ENCODE measurements at regions of chr17 and their contacts with region 1.

Region 1: GRCh38 chr17:68435876-68436842 is 21.1 kb downstream of the WIPI1 start:
- DNase-seq: peak; percentile 79
- H3K4me3 Mint-ChIP-seq: peak overlapping the region; percentile 30
- H3K27ac Mint-ChIP-seq: peak overlapping the region; percentile 90
- H3K4me1 Mint-ChIP-seq: peaks cover 49% of the 10 kb centered on the region
- H3K27me3 Mint-ChIP-seq: no peaks in the 10 kb centered on the region

Region 2: DNA sequence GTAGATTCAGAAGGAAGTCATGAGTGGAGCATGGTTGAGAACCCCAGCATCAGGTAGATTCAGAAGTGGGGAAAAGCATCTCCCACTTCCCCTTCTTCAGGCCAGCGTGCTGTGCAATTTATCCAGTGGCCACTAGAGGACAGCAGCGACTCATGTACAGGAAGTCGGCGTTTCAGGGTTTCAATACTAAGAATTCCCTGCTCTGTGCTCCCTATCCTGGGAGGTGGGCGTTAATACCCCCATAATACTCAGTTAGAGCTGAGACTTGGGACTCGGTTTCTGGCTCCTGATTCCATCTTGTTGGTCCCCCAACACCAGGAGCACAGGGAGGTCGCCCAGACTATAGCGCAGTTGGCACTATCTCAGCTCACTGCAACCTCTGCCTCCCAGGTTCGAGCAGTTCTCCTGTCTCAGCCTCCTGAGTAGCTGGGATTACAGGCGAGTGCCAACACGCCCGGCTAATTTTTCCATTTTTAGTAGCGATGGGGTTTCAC is 263.7 kb before region 1 on chr17:
- intact Hi-C with region 1: loop called (anchors 2 kb)
- DNase-seq: peak; percentile 58
- H3K4me3 Mint-ChIP-seq: no peak overlapping the region
- H3K27ac Mint-ChIP-seq: no peak overlapping the region
- H3K4me1 Mint-ChIP-seq: peaks cover 29% of the 10 kb centered on the region
- H3K27me3 Mint-ChIP-seq: no peaks in the 10 kb centered on the region

Region 3: GRCh38 chr17:68210570-68211315 is 225.4 kb before region 1 on chr17:
- intact Hi-C with region 1: no loop called
- DNase-seq: no peak
- H3K4me3 Mint-ChIP-seq: no peak overlapping the region
- H3K27ac Mint-ChIP-seq: peak overlapping the region; percentile 8
- H3K4me1 Mint-ChIP-seq: peaks cover 48% of the 10 kb centered on the region
- H3K27me3 Mint-ChIP-seq: no peaks in the 10 kb centered on the region

Region 4: GRCh38 chr17:68260051-68260762 is 176.0 kb before region 1 on chr17:
- intact Hi-C with region 1: loop called (anchors 1 kb)
- DNase-seq: no peak
- H3K4me3 Mint-ChIP-seq: peak overlapping the region; percentile 77
- H3K27ac Mint-ChIP-seq: peak overlapping the region; percentile 93
- H3K4me1 Mint-ChIP-seq: peaks cover 67% of the 10 kb centered on the region
- H3K27me3 Mint-ChIP-seq: no peaks in the 10 kb centered on the region

Region 5: GRCh38 chr17:68356520-68356919 is 79.6 kb before region 1 on chr17:
- intact Hi-C with region 1: loop called (anchors 2 kb)
- DNase-seq: peak; percentile 75
- H3K4me3 Mint-ChIP-seq: peak overlapping the region; percentile 73
- H3K27ac Mint-ChIP-seq: peak overlapping the region; percentile 86
- H3K4me1 Mint-ChIP-seq: peaks cover 57% of the 10 kb centered on the region
- H3K27me3 Mint-ChIP-seq: no peaks in the 10 kb centered on the region

Region 6: GRCh38 chr17:68381076-68381900 is 54.9 kb before region 1 on chr17:
- intact Hi-C with region 1: no loop called
- DNase-seq: no peak
- H3K4me3 Mint-ChIP-seq: no peak overlapping the region
- H3K27ac Mint-ChIP-seq: no peak overlapping the region
- H3K4me1 Mint-ChIP-seq: peaks cover 13% of the 10 kb centered on the region
- H3K27me3 Mint-ChIP-seq: no peaks in the 10 kb centered on the region

Region 7: DNA sequence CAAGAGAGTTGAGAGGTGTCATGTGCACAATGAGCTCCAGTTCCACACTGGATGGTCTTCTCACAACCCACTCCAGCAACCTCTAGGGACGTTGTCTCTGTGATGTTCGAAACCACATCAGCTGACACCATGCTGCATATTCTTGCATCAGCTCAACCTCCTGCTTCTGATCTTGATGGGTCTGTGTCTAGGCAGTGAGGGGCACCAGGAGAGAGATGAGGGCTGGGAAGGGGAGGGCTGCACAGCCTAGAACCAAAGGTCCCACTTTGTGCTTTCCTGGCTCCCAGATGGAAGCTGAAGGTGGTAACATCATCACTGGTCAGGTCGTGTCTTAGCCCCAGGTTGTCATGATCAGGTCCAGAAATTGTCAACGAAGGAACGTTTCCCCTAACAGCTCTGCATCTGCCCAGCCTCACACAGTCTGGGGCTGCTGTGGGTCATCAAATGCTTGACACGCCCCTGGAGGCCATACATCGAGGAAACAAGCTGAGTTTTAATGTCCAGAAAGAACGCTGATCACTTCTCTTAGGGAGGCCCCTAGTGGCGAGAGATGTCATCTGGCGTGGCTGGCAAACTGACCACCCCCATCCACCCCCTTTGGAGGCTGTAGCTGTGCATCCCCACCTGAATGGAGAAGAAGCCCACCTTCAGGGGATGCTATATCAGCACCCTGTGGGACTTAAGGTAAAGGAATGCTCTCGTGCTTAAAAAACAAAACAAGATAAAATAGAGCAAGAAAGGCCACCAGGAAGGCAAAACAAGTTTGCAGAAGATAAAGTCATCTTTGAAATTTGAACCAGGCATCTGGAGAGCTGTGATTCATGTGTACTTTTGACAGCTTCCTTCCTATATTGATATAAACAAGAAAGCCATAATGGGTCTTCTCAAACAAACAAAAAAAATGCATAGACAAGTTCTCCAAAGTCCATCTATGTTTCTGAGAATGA is 37.2 kb before region 1 on chr17:
- intact Hi-C with region 1: loop called (anchors 1 kb)
- DNase-seq: peak; percentile 19
- H3K4me3 Mint-ChIP-seq: peak overlapping the region; percentile 39
- H3K27ac Mint-ChIP-seq: peak overlapping the region; percentile 84
- H3K4me1 Mint-ChIP-seq: peaks cover 31% of the 10 kb centered on the region
- H3K27me3 Mint-ChIP-seq: no peaks in the 10 kb centered on the region

Region 8: DNA sequence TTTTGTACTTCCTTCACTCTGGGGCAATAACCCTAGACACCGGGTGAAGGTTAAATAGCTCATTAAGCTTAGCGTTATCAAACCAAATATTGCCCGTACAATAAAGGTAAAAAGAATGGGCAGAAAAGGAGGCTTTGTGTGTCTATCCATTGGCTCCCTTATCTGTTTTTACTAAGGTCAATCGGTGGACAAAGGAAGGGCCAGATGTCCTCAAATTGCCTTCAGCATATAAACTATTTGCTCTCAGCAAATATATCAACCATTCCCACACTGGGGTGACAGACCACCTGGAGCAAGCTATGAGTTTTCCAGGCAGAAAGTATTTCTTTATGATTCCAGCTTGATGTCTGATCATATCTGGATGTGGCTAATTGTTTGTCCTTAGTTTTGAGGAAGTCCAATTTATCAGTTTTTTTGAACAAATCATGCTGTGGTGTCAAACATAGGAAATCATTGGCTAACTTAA is 46.5 kb after region 1 on chr17:
- intact Hi-C with region 1: no loop called
- DNase-seq: no peak
- H3K4me3 Mint-ChIP-seq: no peak overlapping the region
- H3K27ac Mint-ChIP-seq: no peak overlapping the region
- H3K4me1 Mint-ChIP-seq: peaks cover 12% of the 10 kb centered on the region
- H3K27me3 Mint-ChIP-seq: peaks cover 40% of the 10 kb centered on the region

Region 9: DNA sequence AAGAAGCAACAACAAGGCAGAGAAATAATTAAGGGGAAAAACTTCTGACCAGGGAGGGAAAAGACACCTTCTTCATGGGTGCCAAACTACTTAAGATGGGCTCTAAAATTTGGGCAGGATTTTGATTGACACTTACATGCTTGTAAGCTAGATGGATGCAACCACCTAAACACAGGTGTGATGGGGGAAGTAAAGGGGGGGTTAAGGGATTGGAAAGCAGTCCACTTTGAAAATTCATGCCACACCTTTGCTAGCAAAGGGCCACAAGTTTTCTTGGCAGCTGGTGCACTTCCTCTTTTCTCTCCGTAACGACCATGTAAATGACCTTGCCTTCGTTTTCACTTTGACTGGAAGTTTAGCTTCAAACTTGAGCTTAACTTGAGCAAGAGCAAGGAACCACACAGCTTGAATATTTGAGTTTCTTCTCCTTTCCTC is 61.7 kb after region 1 on chr17:
- intact Hi-C with region 1: no loop called
- DNase-seq: no peak
- H3K4me3 Mint-ChIP-seq: peak overlapping the region; percentile 38
- H3K27ac Mint-ChIP-seq: peak overlapping the region; percentile 81
- H3K4me1 Mint-ChIP-seq: peaks cover 28% of the 10 kb centered on the region
- H3K27me3 Mint-ChIP-seq: peaks cover 3% of the 10 kb centered on the region

Measured in activated T-helper 2 cell treated with anti-CD3 and anti-CD28 coated beads, Interferon-gamma antibody, Interleukin-2, Interleukin-4, amounts not matched to agents 10 μg/mL and 5 μg/mL and 100 μg/mL, durations not matched to agents 14 hours and 24 hours and 36 hours (primary cell).